RWPE1 (cell line): ENCODE measurements at regions of chr9 and their contacts with region 1.

Region 1: DNA sequence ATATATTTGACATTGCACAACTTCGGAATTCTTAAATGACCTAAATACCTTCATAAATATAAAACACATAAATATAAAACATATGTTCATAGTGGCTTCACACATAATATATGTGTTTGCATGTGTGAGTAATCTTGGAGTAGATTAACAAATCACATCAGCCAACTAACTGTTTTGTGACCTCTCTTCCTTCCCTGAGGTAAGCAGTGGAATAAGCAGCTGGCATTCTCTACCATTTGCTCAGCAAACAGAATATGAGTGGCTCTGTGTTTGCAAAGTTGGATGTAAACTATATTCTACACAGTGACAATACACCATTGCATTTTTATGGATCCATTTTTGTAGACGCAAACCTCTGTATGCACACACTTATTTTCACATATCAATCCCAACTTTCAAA is 189.9 kb downstream of the ACER2 start:
- DNase-seq: no peak
- H3K27ac ChIP-seq: no peak overlapping the region
- CTCF ChIP-seq: no peak

Region 2: GRCh38 chr9:19631181-19631580 is 32.5 kb after region 1 on chr9:
- CTCF ChIA-PET with region 1: no interaction called
- POLR2A ChIA-PET with region 1: no interaction called
- DNase-seq: no peak
- H3K27ac ChIP-seq: no peak overlapping the region
- CTCF ChIP-seq: no peak

Region 3: DNA sequence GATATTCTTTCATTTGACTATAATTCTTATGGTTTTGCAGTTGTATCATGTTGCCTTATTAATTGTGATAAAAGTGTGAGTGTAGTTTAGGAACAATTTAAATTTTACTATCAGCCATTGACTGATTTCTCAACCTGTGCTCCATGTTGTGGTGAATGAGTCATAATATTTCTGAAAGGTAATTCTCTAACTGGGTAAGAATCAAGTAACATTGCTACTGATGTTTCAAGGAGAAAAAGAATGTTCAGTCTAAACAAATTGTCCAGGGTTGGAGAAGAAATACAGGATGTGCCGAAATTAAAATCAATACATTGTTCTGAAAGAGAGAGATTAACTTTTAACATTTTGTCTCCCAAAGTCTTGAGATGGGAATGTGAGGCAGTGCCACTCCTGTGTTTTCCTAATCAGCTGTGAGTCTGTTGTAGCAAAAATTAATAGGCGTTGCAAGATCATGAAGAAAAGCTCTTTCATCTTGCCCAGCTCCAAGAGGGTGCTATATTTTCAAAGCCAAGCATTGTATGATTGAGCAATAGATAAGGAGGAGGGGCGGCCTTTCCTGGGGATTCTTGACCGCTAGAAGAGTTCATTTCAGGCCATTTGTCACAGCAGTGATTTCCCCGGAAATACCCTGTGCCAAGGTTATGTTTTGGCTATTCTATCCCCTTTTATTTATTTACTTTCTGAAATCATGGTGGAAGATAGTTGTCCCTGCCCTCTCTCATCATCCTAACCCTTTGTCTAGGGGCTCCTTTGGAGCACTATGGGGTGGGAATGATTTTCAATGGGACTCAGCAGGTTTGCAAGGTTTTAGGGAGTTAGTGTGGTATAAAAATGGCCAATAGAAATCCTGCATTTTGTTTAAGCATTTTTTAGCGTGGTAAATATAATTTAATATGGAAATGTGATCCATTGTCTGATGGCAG is 1236.9 kb after region 1 on chr9:
- CTCF ChIA-PET with region 1: interaction called, 13 read pairs
- POLR2A ChIA-PET with region 1: no interaction called
- DNase-seq: peak; percentile 35
- H3K27ac ChIP-seq: no peak overlapping the region
- CTCF ChIP-seq: no peak